CD4-positive, alpha-beta T cell (primary cell): ENCODE measurements at regions of chr17 and their contacts with region 1.

Region 1: GRCh38 chr17:16589097-16589969 is 20.3 kb upstream of the ZNF287 start:
- DNase-seq: peak; percentile 85 to 96 (median 92)
- ATAC-seq: peak; percentile 93
- H3K4me3 ChIP-seq: peak overlapping the region; percentile 63
- H3K4me3 Mint-ChIP-seq: peak overlapping the region; percentile 87
- H3K27ac ChIP-seq: no peak overlapping the region
- H3K27ac Mint-ChIP-seq: no peak overlapping the region
- H3K4me1 ChIP-seq: peaks cover 16% of the 10 kb centered on the region
- H3K4me1 Mint-ChIP-seq: peaks cover 4% of the 10 kb centered on the region
- H3K27me3 ChIP-seq: peaks cover 0 to 7% of the 10 kb centered on the region in 2 experiments
- H3K27me3 Mint-ChIP-seq: peaks cover 61% of the 10 kb centered on the region
- CTCF ChIP-seq: peak; percentile 99

Region 2: GRCh38 chr17:16453493-16453851 is 135.9 kb before region 1 on chr17:
- CTCF ChIA-PET with region 1: interaction called, 3 read pairs
- POLR2A ChIA-PET with region 1: no interaction called
- intact Hi-C with region 1: loop called (anchors 1 to 2 kb)
- DNase-seq: no peak
- ATAC-seq: no peak
- H3K4me3 ChIP-seq: no peak overlapping the region
- H3K4me3 Mint-ChIP-seq: no peak overlapping the region
- H3K27ac ChIP-seq: no peak overlapping the region
- H3K27ac Mint-ChIP-seq: peak overlapping the region; percentile 50
- H3K4me1 ChIP-seq: peaks cover 8% of the 10 kb centered on the region
- H3K4me1 Mint-ChIP-seq: peaks cover 14% of the 10 kb centered on the region
- H3K27me3 ChIP-seq: no peaks in the 10 kb centered on the region
- H3K27me3 Mint-ChIP-seq: no peaks in the 10 kb centered on the region
- CTCF ChIP-seq: no peak

Region 3: DNA sequence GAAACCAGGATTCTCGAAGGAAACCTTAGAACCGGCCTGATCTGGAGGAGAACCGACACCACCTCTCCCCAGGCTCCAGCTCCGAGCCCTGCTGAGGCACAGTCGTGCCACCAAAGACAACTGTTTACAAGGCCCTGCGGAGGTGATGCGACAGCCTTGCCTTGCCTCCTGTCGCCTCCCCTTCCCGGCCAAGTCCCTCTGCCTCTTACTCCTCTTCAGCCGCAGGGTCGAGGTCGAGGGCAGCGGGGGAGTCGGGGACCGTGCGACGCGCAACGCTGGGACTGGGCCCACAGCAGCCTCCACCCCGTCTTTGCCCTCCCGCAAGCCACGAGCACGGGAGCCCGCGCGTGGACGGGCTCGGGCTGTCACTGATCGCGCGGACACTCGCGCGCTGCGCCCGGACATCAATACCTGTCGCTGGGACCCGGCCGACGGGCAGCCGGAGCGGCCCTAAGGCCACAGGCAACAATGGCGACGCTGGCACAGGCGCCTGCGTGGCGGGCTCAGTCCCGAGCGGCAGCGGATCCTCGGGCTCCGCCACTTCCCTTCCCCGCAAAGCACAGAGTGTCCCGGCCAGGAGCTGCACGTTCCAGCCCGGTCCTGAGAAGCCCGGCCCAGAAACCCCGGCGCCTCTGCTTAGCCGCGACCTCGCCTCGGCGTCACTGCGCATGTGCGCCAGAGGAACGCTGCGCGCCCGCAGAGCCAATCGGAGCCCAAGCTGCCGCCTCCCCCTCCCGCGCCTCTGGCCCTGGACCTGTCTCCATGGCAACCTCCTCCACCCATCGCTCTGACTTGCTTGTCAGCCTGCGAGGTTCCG is 20.6 kb before region 1 on chr17 and contains the start of gene ZNF287:
- CTCF ChIA-PET with region 1: interaction called, 10 read pairs
- POLR2A ChIA-PET with region 1: interaction called, 10 read pairs
- intact Hi-C with region 1: loop called (anchors 2 kb)
- DNase-seq: peak; percentile 87 to 98 (median 92)
- ATAC-seq: peak; percentile 98
- H3K4me3 ChIP-seq: peak within 1 kb of the TSS; percentile 63
- H3K4me3 Mint-ChIP-seq: peak within 1 kb of the TSS; percentile 87
- H3K27ac ChIP-seq: peak within 1 kb of the TSS in 1 of 2 donors; percentile 29
- H3K27ac Mint-ChIP-seq: peak within 1 kb of the TSS; percentile 70
- H3K4me1 ChIP-seq: peaks cover 18% of the 10 kb centered on the region
- H3K4me1 Mint-ChIP-seq: peaks cover 13% of the 10 kb centered on the region
- H3K27me3 ChIP-seq: no peaks in the 10 kb centered on the region
- H3K27me3 Mint-ChIP-seq: peaks cover 4% of the 10 kb centered on the region
- CTCF ChIP-seq: no peak
- total RNA-seq, gene ZNF287: 6.9 to 7.8 TPM

Region 4: GRCh38 chr17:16653209-16654041 is 64.1 kb after region 1 on chr17 and contains the start of gene ZNF624:
- CTCF ChIA-PET with region 1: interaction called, 9 read pairs
- POLR2A ChIA-PET with region 1: no interaction called
- intact Hi-C with region 1: loop called in 1 of 2 experiments (anchors 5 kb)
- DNase-seq: peak; percentile 78 to 94 (median 83)
- ATAC-seq: peak; percentile 97
- H3K4me3 ChIP-seq: peak within 1 kb of the TSS; percentile 93
- H3K4me3 Mint-ChIP-seq: peak within 1 kb of the TSS; percentile 86
- H3K27ac ChIP-seq: peak within 1 kb of the TSS in 1 of 2 donors; percentile 43
- H3K27ac Mint-ChIP-seq: peak within 1 kb of the TSS; percentile 84
- H3K4me1 ChIP-seq: peaks cover 14% of the 10 kb centered on the region
- H3K4me1 Mint-ChIP-seq: peaks cover 31% of the 10 kb centered on the region
- H3K27me3 ChIP-seq: no peaks in the 10 kb centered on the region
- H3K27me3 Mint-ChIP-seq: peaks cover 18% of the 10 kb centered on the region
- CTCF ChIP-seq: no peak
- total RNA-seq, gene ZNF624: 2.8 to 3.2 TPM